MCF 10A (cell line): ENCODE measurements at regions of chr12 and their contacts with region 1.

Region 1: DNA sequence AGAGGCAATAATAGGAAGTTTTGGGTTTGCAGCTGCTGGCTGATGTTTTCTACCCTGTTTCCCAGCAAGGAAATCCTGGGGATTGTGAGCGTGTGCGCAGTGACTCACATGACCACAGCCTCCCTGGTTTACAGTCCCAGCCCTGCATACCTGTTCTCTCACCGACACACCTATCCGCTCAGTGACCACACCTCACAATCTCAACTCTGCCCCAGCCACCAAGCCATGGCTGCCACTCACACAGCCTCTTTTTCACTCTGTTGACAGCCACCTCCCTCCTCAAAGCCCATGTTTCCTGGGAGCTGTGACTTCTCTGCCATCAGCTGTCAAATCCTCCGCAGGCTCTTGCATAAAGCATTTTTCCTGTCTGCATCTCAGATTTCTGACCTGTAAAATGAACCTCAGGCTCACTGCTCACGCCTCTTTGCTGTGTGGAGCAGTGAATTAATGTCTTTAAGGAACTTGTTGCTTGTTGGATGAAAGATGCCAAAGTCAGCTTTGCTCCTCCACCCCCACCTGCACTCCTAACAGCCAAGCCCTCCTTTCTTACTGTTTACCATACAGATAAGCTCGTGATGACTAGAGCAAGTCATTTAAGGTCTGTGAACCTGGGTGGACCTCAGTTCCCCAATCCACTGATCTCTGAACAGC is 43.5 kb downstream of the B4GALNT3 start:
- DNase-seq: peak; percentile 80
- H3K4me3 Mint-ChIP-seq: peak overlapping the region; percentile 36
- H3K27ac Mint-ChIP-seq: peak overlapping the region; percentile 90
- H3K4me1 Mint-ChIP-seq: peaks cover 13% of the 10 kb centered on the region
- H3K27me3 Mint-ChIP-seq: no peaks in the 10 kb centered on the region
- CTCF ChIP-seq: no peak

Region 2: GRCh38 chr12:452667-453210 is 50.5 kb before region 1 on chr12:
- CTCF ChIA-PET with region 1: interaction called, 12 read pairs
- POLR2A ChIA-PET with region 1: interaction called, 3 read pairs
- intact Hi-C with region 1: loop called (anchors 10 kb)
- DNase-seq: no peak
- H3K4me3 Mint-ChIP-seq: no peak overlapping the region
- H3K27ac Mint-ChIP-seq: no peak overlapping the region
- H3K4me1 Mint-ChIP-seq: no peaks in the 10 kb centered on the region
- H3K27me3 Mint-ChIP-seq: peaks cover 28% of the 10 kb centered on the region
- CTCF ChIP-seq: peak; percentile 49

Region 3: DNA sequence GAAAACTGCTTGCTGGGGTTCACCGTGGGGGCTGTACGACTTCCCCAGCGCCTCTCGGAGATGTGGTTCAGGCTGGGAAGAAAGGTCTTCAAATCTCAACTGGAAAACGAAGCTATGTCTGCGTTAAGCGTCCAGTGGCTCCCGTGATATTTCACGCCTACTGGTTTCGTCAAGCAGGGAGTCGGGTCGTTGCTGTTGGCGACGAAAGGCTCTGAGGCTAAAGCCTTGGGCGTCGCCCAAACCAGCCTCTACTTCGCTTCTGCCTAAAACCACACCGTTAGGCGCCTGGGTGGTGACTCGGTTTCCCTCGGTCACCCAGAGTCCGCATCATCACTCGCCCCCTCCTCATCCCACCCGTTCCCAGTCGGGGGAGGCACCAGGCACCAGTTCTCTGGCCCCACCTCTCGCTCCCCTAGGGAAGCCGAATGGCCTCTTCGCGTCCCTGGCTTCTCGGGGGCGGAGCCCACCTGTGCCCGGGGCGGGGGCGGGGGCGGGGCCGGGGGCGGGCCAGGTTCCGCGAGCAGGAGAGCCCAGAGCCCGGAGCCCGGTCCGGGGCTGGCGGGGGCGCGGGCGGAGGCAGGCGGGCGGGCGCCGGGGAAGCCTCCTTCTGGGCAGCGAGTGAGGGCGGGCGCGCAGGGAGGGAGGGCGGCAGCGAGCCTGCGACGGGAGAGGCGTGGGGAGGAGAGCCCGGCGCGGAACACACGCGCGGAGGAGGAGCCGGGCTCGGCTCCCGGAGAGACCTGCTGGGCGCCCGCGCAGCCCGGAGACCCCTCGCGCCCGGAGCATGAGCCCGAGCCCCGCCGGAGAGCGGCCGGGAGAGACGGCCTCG is 43.6 kb before region 1 on chr12 and contains the start of gene B4GALNT3:
- CTCF ChIA-PET with region 1: interaction called, 12 read pairs
- POLR2A ChIA-PET with region 1: interaction called, 3 read pairs
- intact Hi-C with region 1: loop called (anchors 10 kb)
- DNase-seq: peak; percentile 39
- H3K4me3 Mint-ChIP-seq: peak within 1 kb of the TSS; percentile 71
- H3K27ac Mint-ChIP-seq: no peak within 1 kb of the TSS
- H3K4me1 Mint-ChIP-seq: peaks cover 23% of the 10 kb centered on the region
- H3K27me3 Mint-ChIP-seq: peaks cover 44% of the 10 kb centered on the region
- CTCF ChIP-seq: no peak
- total RNA-seq, gene B4GALNT3: 0.68 and 0.76 TPM in 2 replicates

Region 4: DNA sequence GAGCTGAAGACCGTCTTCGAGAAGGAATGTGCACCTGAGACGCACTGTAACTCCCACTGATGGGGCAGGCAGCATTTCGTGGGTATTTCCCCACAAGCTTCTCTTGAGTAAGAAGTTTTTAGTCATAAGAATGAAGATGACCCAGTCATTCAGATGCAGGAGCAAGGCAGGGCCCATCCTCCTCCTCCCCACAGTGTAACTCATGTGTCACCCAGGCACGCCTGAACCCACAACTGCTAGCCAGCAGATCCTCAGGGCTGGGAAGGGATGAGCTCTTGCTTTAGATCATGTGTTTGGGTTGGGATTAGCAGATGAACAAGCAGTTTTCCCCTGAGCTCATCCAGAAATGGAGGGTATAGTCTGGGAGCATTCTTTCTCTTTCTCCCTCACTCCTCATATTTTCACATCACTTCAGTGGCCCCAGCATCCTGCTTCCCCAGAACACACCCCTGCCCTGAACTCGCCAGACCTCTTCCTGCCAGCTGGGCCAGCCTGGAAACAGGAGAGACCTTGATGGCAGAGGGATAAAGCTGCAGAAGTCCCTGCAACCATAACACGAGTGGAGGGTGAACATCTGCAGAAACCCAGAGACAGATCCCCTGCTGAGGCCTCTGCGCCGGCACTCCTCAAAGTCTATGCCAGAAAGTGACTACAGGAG is 29.8 kb after region 1 on chr12:
- CTCF ChIA-PET with region 1: interaction called, 3 read pairs
- POLR2A ChIA-PET with region 1: interaction called, 26 read pairs
- intact Hi-C with region 1: no loop called
- DNase-seq: peak; percentile 61
- H3K4me3 Mint-ChIP-seq: no peak overlapping the region
- H3K27ac Mint-ChIP-seq: no peak overlapping the region
- H3K4me1 Mint-ChIP-seq: peaks cover 15% of the 10 kb centered on the region
- H3K27me3 Mint-ChIP-seq: no peaks in the 10 kb centered on the region
- CTCF ChIP-seq: no peak